Sciatic nerve (tissue), 2 donors: ENCODE measurements at regions of chr14 and their contacts with region 1.

Region 1: GRCh38 chr14:68552602-68553001 is 240.3 kb downstream of the ZFP36L1 start:
- DNase-seq: no peak
- ATAC-seq: no peak

Region 2: GRCh38 chr14:67806246-67806645 is 746.4 kb before region 1 on chr14:
- intact Hi-C with region 1: no loop called
- DNase-seq: no peak
- ATAC-seq: no peak

Region 3: DNA sequence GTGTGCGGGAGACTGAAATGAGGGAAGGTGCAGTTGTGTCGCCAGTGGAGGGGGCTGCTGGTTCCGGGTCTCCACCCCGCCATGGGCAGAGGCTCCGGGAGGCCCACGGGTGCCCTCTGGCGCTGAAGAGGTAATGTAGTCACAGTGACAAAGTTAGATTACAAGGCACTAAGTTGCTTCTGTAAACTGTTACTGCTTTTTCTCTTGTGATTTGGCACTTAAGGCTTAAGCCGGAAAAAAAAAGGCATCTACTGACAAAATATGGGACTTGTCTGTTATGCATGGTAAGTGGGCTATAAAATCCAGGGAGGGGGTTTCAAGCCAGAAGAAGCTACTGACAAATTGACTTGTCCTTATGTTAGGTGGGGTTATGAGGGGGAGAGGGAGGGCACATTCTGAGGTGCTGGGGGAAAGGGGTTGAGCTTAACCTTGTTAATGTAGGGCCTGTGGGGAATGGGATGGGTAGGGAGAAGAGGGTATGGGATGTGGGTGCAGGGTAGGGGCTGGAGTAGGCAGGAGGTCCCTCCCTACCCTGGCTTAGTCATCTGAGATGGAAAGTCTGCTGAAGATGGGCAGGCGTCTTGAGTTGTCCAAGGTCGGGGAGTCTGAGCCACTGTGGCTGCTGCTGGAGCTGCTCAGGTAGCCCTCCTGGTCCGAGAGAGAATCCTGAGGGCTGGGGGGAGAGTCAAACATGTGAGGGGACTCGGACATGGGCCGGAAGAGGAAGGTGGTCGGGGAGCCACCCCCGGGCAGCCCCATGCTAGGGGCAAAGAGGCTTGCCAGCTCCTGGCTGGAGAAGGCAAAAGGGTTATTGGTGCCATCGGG is 236.6 kb after region 1 on chr14:
- intact Hi-C with region 1: loop called (anchors 10 kb)
- DNase-seq: peak; percentile 88
- ATAC-seq: peak; percentile 4